ENCODE measurements at regions of chr14 and their contacts with region 1.

Region 1: DNA sequence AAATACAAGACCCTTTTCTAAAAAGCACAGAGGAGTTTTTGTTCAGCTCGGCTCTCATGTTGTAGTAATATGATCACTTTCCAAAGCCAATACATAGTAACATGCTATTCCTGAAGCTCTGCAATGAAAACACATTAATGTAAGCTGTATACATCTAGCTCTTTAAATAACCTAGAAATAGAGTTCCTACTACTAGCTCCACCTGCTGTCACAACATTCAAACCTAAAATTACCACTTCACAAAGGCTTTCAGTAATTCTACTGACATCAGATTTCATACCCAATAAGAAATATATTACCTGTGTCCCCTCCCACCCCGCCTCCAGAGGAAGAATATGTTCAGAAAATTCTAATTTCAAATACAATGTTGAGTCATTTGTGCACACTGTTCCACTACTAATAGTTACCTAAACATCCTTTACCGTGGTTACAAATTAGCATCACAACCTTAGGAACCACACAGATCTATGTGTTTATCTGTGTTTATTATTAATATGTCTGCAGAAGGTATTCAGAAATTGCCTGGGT is 17.8 kb downstream of the EFCAB11 start:
- DNase-seq: no peak
- H3K4me3 ChIP-seq: no peak overlapping the region
- H3K27me3 ChIP-seq: no peaks in the 10 kb centered on the region
- CTCF ChIP-seq: no peak

Region 2: DNA sequence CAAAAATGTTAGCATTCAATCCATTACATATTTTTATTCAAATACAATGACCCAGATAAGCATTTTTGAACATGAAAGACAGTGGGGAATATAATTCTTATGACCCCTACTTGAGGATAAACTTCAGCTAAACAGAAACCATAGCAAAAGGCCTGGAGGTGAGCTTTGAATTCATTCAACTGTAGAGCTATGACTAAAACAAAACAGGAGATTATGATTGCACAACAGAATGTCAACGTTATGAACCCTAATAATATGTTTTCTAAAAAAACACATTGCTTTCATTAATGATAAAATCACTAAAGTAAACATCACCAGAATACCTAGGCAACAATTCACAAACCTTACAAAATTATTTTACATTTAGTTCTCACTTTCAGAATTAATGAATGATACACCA is 10.0 kb before region 1 on chr14:
- CTCF ChIA-PET with region 1: interaction called, 38 read pairs
- POLR2A ChIA-PET with region 1: no interaction called
- DNase-seq: no peak
- H3K4me3 ChIP-seq: no peak overlapping the region
- H3K27me3 ChIP-seq: no peaks in the 10 kb centered on the region
- CTCF ChIP-seq: no peak

Region 3: GRCh38 chr14:89954070-89955028 is 17.6 kb after region 1 on chr14 and contains the start of gene EFCAB11:
- CTCF ChIA-PET with region 1: interaction called, 14 read pairs
- POLR2A ChIA-PET with region 1: no interaction called
- DNase-seq: peak; percentile 94
- H3K4me3 ChIP-seq: peak within 1 kb of the TSS; percentile 54
- H3K27me3 ChIP-seq: no peaks in the 10 kb centered on the region
- CTCF ChIP-seq: 0 out of 2 replicates have a peak, but pooled peaks have one; percentile 18
- polyA plus RNA-seq, gene EFCAB11: 2.2 and 7.3 TPM in 2 replicates